WTC11 (cell line): ENCODE measurements at regions of chr12 and their contacts with region 1.

Region 1: DNA sequence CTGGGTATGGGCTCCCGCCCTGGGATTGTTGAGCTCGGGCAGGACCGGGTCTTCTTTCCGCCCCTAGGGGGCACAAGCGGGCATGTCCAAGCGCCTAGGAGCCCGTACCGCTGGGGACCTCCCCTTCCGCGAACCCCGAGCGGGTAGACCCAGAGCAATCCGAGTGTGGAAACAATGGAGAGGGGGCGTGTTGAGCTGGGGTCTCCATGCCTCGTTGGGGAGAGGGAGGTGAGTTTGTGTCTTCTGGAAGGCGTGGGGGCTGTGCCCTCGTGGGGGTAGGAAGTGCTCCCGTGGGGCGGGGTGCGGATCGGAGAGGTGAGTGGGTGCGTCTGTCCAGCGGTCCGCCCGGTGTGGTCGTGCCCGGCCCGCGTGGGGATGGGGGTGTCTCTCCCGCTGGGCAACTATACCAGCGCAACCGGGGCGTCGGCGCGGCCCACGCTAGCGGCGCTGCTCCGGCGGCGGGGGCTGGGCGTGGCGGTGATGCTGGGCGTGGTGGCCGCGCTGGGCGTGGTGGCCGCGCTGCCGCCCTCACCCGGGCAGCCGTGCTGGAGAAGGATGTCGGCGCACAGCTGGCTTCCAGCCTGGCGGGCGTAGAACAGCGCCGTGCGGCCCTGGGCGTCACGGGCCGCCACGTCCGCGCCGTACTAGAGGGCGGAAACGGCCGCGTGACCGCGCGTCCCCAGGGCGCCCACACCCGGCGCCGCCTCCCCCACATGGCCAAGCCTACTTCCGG is 12.2 kb downstream of the AGAP2 start:
- DNase-seq: peak; percentile 92
- ATAC-seq: peak; percentile 89
- H3K4me3 Mint-ChIP-seq: peak overlapping the region; percentile 94
- H3K27ac Mint-ChIP-seq: no peak overlapping the region
- H3K4me1 Mint-ChIP-seq: peaks cover 15% of the 10 kb centered on the region
- H3K27me3 Mint-ChIP-seq: peaks cover 87% of the 10 kb centered on the region
- CTCF ChIP-seq: peak; percentile 40; the same call in 1 of the 2 replicates

Region 2: GRCh38 chr12:57533108-57533507 is 193.2 kb before region 1 on chr12:
- CTCF ChIA-PET with region 1: no interaction called
- POLR2A ChIA-PET with region 1: no interaction called
- DNase-seq: no peak
- ATAC-seq: no peak
- H3K4me3 Mint-ChIP-seq: no peak overlapping the region
- H3K27ac Mint-ChIP-seq: no peak overlapping the region
- H3K4me1 Mint-ChIP-seq: peaks cover 9% of the 10 kb centered on the region
- H3K27me3 Mint-ChIP-seq: no peaks in the 10 kb centered on the region
- CTCF ChIP-seq: no peak

Region 3: GRCh38 chr12:57590536-57591479 is 135.5 kb before region 1 on chr12 and contains the start of gene PIP4K2C:
- CTCF ChIA-PET with region 1: interaction called, 11 read pairs
- POLR2A ChIA-PET with region 1: no interaction called
- DNase-seq: peak; percentile 91
- ATAC-seq: peak; percentile 98
- H3K4me3 Mint-ChIP-seq: peak within 1 kb of the TSS; percentile 89
- H3K27ac Mint-ChIP-seq: peak within 1 kb of the TSS; percentile 72
- H3K4me1 Mint-ChIP-seq: peaks cover 14% of the 10 kb centered on the region
- H3K27me3 Mint-ChIP-seq: peaks cover 3% of the 10 kb centered on the region; the same call in 1 of the 2 replicates
- CTCF ChIP-seq: no peak
- total RNA-seq, gene PIP4K2C: 25.4 to 26.9 TPM (median 25.8 TPM) in 3 replicates

Region 4: DNA sequence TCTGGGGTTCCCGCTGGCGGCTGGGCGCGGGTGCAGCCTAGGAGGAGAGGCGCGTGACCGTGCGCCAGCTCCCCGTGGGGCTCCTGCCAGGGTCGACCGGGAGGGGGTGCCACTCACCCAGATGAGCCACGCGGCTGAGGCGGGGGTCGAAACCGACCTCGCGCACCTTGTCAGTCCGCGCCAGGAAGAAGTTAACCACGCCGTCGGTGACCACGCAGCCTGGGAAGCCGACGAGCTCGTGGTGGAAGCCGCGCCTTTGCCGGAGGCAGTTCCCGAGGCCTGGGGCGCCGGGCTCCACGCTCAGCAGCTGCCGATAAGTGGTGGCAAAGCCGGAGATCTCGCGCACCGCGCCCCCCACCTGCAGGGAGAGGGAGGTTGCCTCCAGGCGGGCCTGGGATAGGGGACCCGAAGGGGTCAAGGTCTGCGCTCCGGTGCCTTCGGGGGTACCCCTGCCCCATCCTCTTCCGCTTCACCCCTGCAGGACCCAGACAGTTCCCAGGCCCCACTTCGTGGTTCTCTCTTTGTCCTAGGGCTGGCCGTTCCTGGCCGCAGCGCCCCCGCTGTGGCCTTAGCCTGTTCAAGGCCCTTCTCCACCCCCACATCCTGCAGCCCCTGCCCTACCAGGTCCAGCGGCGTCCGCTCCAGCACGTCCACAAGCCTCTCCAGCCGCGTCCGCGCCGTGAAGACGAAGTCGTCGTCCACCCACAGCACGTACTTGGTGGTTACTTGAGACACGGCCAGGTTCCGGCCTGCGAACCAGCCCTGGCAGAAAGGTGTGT is 98.6 kb before region 1 on chr12:
- CTCF ChIA-PET with region 1: interaction called, 17 read pairs
- POLR2A ChIA-PET with region 1: no interaction called
- DNase-seq: peak; percentile 53
- ATAC-seq: peak; percentile 8
- H3K4me3 Mint-ChIP-seq: peak overlapping the region; percentile 64
- H3K27ac Mint-ChIP-seq: no peak overlapping the region
- H3K4me1 Mint-ChIP-seq: peaks cover 21% of the 10 kb centered on the region
- H3K27me3 Mint-ChIP-seq: peaks cover 100% of the 10 kb centered on the region
- CTCF ChIP-seq: no peak

Region 5: DNA sequence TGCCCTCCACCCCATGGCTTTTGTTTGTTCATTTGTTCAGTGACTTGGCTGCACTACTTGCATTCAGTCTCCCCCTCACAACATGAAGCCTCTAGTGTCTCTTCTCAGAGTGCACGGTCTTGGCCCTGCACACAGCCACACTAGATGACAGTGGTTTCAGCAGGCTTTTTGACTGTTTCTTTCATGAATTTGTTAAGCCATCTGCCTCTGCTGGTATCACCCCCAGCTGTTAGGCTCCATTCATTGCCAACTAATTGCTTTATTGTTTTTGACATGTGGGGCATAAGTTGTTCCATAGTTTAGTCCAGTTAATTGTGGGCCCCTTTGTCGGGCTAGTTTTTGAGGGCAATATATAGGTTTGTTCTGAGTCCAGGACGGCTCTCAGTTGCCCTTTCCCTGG is 13.6 kb before region 1 on chr12:
- CTCF ChIA-PET with region 1: interaction called, 13 read pairs
- POLR2A ChIA-PET with region 1: no interaction called
- DNase-seq: no peak
- ATAC-seq: no peak
- H3K4me3 Mint-ChIP-seq: no peak overlapping the region
- H3K27ac Mint-ChIP-seq: no peak overlapping the region
- H3K4me1 Mint-ChIP-seq: no peaks in the 10 kb centered on the region
- H3K27me3 Mint-ChIP-seq: no peaks in the 10 kb centered on the region
- CTCF ChIP-seq: no peak

Region 6: DNA sequence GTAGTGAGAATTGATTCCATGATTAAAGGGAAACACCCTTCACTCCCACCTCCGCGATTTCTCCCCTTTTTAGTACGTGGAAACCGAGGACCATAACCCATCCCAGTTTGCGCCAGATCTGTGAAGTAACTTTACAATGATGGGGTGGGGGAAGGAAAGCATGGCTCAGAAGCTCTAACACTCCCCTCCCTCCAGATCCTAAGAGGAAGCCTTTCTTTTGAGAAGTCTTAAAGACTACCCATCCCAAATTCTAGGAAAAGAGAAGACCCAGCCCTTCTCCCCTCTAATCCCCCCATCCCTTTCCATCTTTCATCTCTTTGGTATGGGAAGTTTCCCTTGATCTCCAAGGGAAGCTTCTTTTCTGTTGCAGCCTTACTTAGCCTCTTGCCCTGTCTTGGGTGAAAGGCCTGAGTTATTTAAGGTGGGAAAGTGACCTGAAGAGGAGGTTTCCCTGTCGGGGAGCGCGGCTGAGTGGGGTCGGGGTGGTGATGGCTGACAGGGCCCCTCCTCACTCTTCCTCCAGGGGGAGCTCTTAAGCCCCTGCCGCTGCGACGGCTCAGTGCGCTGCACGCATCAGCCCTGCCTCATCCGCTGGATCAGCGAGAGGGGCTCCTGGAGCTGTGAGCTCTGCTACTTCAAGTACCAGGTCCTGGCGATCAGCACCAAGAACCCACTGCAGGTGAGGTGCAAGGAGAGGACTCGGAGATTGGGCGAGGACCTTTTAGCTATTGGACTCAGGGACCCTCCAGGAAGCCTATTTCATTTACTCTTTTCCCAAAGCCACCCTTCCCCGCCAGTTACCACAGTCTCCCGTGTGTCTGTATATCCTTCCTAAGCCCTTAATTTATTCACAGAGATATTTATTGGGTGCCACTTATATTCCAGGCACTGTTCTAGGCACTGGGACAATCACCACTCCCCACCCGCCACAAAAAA is 30.4 kb after region 1 on chr12:
- CTCF ChIA-PET with region 1: interaction called, 16 read pairs
- POLR2A ChIA-PET with region 1: no interaction called
- DNase-seq: peak; percentile 85
- ATAC-seq: peak; percentile 64
- H3K4me3 Mint-ChIP-seq: peak overlapping the region; percentile 72
- H3K27ac Mint-ChIP-seq: no peak overlapping the region
- H3K4me1 Mint-ChIP-seq: peaks cover 34% of the 10 kb centered on the region
- H3K27me3 Mint-ChIP-seq: peaks cover 84% of the 10 kb centered on the region
- CTCF ChIP-seq: peak; percentile 78